Right cardiac atrium (tissue), 5 donors: ENCODE measurements at regions of chr16 and their contacts with region 1.

Region 1: GRCh38 chr16:75471723-75472633 is 7.5 kb upstream of the TMEM170A start:
- DNase-seq: peak; percentile 42 to 71 (median 57)
- ATAC-seq: peak; percentile 93 to 95
- H3K4me3 ChIP-seq: no peak overlapping the region
- H3K27ac ChIP-seq: no peak overlapping the region
- H3K4me1 ChIP-seq: no peaks in the 10 kb centered on the region
- H3K27me3 ChIP-seq: no peaks in the 10 kb centered on the region

Region 2: GRCh38 chr16:75534560-75535205 is 62.7 kb after region 1 on chr16:
- intact Hi-C with region 1: loop called in 1 of 4 experiments (anchors 10 kb)
- DNase-seq: no peak
- ATAC-seq: no peak
- H3K4me3 ChIP-seq: no peak overlapping the region
- H3K27ac ChIP-seq: no peak overlapping the region
- H3K4me1 ChIP-seq: no peaks in the 10 kb centered on the region
- H3K27me3 ChIP-seq: no peaks in the 10 kb centered on the region

Region 3: GRCh38 chr16:75555707-75556430 is 83.9 kb after region 1 on chr16 and contains the start of gene TMEM231:
- intact Hi-C with region 1: loop called in 1 of 4 experiments (anchors 10 kb)
- DNase-seq: peak; percentile 99 to 100 (median 99)
- ATAC-seq: peak; percentile 98
- H3K4me3 ChIP-seq: peak within 1 kb of the TSS; percentile 69
- H3K27ac ChIP-seq: peak within 1 kb of the TSS; percentile 64
- H3K4me1 ChIP-seq: no peaks in the 10 kb centered on the region
- H3K27me3 ChIP-seq: no peaks in the 10 kb centered on the region
- total RNA-seq, gene TMEM231: 6.3 to 7.8 (median 6.8) TPM

Region 4: GRCh38 chr16:75566040-75566810 is 94.2 kb after region 1 on chr16 and contains the start of gene GABARAPL2:
- intact Hi-C with region 1: no loop called
- DNase-seq: peak; percentile 86 to 95 (median 93)
- ATAC-seq: peak; percentile 94
- H3K4me3 ChIP-seq: peak within 1 kb of the TSS; percentile 94
- H3K27ac ChIP-seq: peak within 1 kb of the TSS; percentile 91
- H3K4me1 ChIP-seq: peaks cover 17% of the 10 kb centered on the region
- H3K27me3 ChIP-seq: no peaks in the 10 kb centered on the region
- total RNA-seq, gene GABARAPL2: 197 to 245 (median 219) TPM

Region 5: GRCh38 chr16:75614066-75614897 is 142.3 kb after region 1 on chr16:
- intact Hi-C with region 1: loop called in 1 of 4 experiments (anchors 10 kb)
- DNase-seq: no peak
- ATAC-seq: no peak
- H3K4me3 ChIP-seq: no peak overlapping the region
- H3K27ac ChIP-seq: no peak overlapping the region
- H3K4me1 ChIP-seq: no peaks in the 10 kb centered on the region
- H3K27me3 ChIP-seq: no peaks in the 10 kb centered on the region

Region 6: DNA sequence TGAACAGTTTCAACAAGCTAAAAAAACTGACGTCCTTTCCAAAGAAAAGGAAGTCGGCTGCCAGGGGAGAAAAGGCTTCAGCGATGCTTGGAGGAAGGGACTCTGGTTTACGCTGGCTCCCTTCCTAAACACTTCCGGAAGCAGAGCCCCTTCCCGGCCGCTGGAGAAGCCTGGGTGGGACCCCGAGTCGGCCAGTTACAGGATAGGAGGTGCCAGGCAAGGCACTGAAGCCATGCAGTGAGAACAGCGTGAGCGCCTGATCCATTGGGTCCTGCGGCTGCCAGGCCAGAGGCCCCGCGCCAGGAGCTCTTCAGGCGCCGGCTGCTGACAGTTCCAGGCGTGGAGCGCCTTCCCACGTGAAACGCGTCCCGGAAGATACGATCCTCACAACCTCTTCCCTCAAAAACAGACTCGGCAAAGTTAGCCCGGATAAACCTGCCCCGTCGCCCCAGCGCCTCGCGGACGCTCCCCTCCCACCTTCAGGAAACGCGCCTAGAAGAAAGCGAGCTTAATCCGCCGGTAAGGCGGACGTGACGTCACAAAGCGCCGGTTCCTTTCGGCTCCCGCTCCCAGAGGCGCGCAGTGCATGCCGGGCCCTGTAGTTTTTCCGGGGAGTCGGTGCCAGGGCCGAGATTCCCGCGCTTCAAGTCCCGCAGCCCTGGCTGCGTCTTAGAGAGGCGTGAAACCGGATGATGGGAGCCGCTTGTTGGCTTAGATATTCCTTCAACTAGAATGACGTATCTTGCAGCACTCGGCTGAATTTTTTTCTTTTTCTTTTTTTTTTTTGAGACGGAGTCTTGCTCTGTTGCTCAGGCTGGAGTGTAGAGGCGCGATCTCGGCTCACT is 151.0 kb after region 1 on chr16 and contains the start of gene ADAT1:
- intact Hi-C with region 1: loop called in 2 of 4 experiments (anchors 10 kb)
- DNase-seq: peak; percentile 99 to 100 (median 99)
- ATAC-seq: peak; percentile 97
- H3K4me3 ChIP-seq: peak within 1 kb of the TSS; percentile 61
- H3K27ac ChIP-seq: peak within 1 kb of the TSS; percentile 96
- H3K4me1 ChIP-seq: peaks cover 7% of the 10 kb centered on the region
- H3K27me3 ChIP-seq: no peaks in the 10 kb centered on the region
- total RNA-seq, gene ADAT1: 17.8 to 27.2 (median 22.4) TPM

Region 7: GRCh38 chr16:75764154-75764768 is 292.3 kb after region 1 on chr16:
- intact Hi-C with region 1: loop called in 3 of 4 experiments (anchors 5 to 10 kb)
- DNase-seq: peak in 2 of 3 donors; percentile 18 to 55
- ATAC-seq: peak; percentile 91 to 92
- H3K4me3 ChIP-seq: no peak overlapping the region
- H3K27ac ChIP-seq: no peak overlapping the region
- H3K4me1 ChIP-seq: no peaks in the 10 kb centered on the region
- H3K27me3 ChIP-seq: no peaks in the 10 kb centered on the region

Region 8: GRCh38 chr16:75810342-75810741 is 338.4 kb after region 1 on chr16:
- intact Hi-C with region 1: no loop called
- DNase-seq: no peak
- ATAC-seq: peak in 1 of 2 donors; percentile 68
- H3K4me3 ChIP-seq: no peak overlapping the region
- H3K27ac ChIP-seq: no peak overlapping the region
- H3K4me1 ChIP-seq: no peaks in the 10 kb centered on the region
- H3K27me3 ChIP-seq: no peaks in the 10 kb centered on the region